A673 (cell line): ENCODE measurements at regions of chr7 and their contacts with region 1.

Region 1: GRCh38 chr7:76179686-76180085 is 22.0 kb upstream of the SRRM3 start:
- DNase-seq: no peak
- H3K4me3 ChIP-seq: no peak overlapping the region
- H3K27ac ChIP-seq: no peak overlapping the region
- H3K4me1 ChIP-seq: peaks cover 3% of the 10 kb centered on the region
- H3K27me3 ChIP-seq: no peaks in the 10 kb centered on the region
- CTCF ChIP-seq: no peak

Region 2: DNA sequence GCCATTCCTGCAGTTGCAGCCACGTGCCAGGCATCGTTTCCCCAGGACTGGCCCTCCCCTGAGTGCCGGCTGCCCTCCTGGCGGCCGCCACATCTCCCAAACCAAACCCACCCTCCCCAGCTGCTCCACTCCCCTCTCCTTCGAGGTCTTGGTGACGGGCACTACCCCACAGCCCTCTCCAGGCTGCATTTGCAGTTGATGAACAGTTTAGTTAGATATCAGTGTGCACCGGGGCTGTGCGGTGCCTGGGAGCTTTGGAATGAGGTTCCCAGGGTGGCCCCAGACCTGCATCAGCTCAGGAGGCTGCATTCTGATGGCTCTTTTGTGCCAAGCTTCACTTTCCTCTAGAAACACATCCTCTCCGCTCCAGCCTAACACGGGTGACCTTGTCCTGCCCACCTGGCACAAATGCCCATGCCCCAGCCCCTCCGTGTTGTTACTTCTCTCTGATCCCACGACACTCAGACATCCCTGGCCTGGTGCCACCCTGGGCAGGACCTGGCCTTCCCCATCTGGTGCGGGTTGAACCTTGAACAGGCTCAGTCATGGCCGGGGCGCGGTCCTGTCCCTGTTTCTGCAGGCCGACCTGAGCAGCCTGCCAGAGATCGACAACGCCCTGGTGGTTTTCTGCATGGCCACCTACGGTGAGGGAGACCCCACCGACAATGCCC is 199.8 kb before region 1 on chr7:
- CTCF ChIA-PET with region 1: no interaction called
- POLR2A ChIA-PET with region 1: no interaction called
- intact Hi-C with region 1: no loop called
- DNase-seq: no peak
- H3K4me3 ChIP-seq: no peak overlapping the region
- H3K27ac ChIP-seq: no peak overlapping the region
- H3K4me1 ChIP-seq: no peaks in the 10 kb centered on the region
- H3K27me3 ChIP-seq: no peaks in the 10 kb centered on the region
- CTCF ChIP-seq: no peak

Region 3: GRCh38 chr7:76314042-76314721 is 134.5 kb after region 1 on chr7:
- CTCF ChIA-PET with region 1: interaction called, 15 read pairs
- POLR2A ChIA-PET with region 1: no interaction called
- intact Hi-C with region 1: loop called (anchors 1 kb)
- DNase-seq: peak; percentile 95
- H3K4me3 ChIP-seq: no peak overlapping the region
- H3K27ac ChIP-seq: no peak overlapping the region
- H3K4me1 ChIP-seq: peaks cover 19% of the 10 kb centered on the region
- H3K27me3 ChIP-seq: no peaks in the 10 kb centered on the region
- CTCF ChIP-seq: peak; percentile 100